Dendritic cell treated with granulocyte-macrophage colony-stimulating factor and Interleukin-4, amounts not matched to agents 40 ng/mL and 50 ng/mL, for 4 days (primary cell): ENCODE measurements at regions of chr11 and their contacts with region 1.

Region 1: DNA sequence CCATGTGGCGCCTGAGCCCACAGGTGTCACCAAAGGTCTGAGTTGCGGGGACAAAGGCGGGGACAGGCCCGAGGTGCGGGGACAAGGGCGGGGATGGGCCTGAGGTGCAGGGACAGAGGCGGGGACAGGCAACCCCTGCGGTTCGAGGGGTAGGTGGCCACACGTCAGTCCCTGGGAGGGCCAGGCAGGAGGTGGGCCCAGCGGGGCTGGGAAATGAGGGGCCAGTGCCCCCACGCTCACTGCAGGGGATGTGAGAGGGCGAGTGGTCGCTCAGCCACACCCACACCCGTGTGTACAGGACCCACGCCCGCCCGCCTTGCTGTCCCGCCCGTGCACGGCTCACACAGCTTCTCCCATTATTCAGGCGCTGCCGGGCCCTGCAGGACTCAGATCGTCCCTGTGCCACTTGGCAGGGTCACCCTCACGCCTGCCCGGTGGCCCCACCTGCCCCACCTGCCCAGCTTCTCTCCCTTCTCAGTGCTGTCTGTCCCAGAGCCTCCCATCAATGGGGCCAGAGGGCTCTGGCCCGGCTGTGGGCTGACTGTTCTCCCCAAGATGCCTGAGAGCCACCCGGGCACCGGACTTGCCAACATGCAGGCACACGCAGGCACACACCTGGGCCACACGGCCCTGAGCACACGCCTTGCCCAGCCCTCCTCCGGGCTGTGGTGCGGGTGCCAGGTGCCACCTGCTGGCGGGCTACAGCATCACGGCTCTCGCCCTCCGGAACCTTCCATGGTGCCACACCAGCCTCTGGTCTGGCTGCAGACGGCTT is 14.2 kb upstream of the MUC6 start:
- H3K4me3 Mint-ChIP-seq: no peak overlapping the region
- H3K27ac Mint-ChIP-seq: no peak overlapping the region
- H3K4me1 Mint-ChIP-seq: peaks cover 24% of the 10 kb centered on the region
- H3K27me3 Mint-ChIP-seq: peaks cover 53% of the 10 kb centered on the region

Region 2: DNA sequence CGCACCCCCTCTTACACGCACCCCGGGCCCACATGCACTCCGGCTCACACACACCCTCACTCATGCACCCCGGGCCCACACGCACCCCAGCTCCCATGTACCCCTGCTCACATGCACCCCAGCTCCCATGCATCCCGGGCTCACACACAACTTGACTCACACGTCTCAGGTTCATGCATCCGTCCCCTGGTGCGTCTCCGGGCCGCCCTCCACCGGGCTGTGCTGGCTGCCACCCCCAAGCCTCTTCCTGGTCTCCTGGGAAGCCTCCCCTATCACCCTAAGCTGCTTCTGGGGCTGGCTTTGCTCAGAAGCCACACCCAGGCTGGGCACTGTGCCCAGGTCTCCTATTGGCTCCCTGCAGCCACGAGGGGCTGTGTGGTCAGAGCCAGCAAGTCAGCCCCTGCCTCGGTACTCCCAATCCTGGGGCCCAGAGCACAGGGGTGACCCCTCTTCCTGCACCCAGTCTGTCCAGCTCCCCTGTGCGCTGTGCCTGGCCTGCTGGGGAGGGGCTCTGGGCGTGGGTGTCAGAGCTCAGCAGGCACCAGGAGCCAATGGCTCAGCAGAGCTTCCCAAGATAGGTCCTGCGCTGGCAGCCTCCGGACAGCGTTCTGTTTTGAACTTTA is 191.1 kb before region 1 on chr11:
- intact Hi-C with region 1: loop called (anchors 10 kb)
- H3K4me3 Mint-ChIP-seq: no peak overlapping the region
- H3K27ac Mint-ChIP-seq: no peak overlapping the region
- H3K4me1 Mint-ChIP-seq: peaks cover 39% of the 10 kb centered on the region
- H3K27me3 Mint-ChIP-seq: no peaks in the 10 kb centered on the region

Region 3: GRCh38 chr11:975827-976226 is 74.9 kb before region 1 on chr11:
- intact Hi-C with region 1: no loop called
- H3K4me3 Mint-ChIP-seq: no peak overlapping the region
- H3K27ac Mint-ChIP-seq: no peak overlapping the region
- H3K4me1 Mint-ChIP-seq: peaks cover 64% of the 10 kb centered on the region
- H3K27me3 Mint-ChIP-seq: no peaks in the 10 kb centered on the region